Panc1 (cell line): ENCODE measurements at regions of chr10 and their contacts with region 1.

Region 1: GRCh38 chr10:48649349-48649944 is 35.2 kb upstream of the WDFY4 start:
- DNase-seq: no peak
- ATAC-seq: peak; percentile 68
- H3K4me3 ChIP-seq: no peak overlapping the region
- H3K27ac ChIP-seq: no peak overlapping the region
- H3K4me1 ChIP-seq: no peaks in the 10 kb centered on the region
- H3K27me3 ChIP-seq: no peaks in the 10 kb centered on the region; the same call in none of the 2 replicates
- CTCF ChIP-seq: no peak; the same call in 1 of the 2 replicates

Region 2: GRCh38 chr10:48551861-48552591 is 97.4 kb before region 1 on chr10:
- CTCF ChIA-PET with region 1: interaction called, 10 read pairs
- POLR2A ChIA-PET with region 1: no interaction called
- in situ Hi-C with region 1: no loop called
- intact Hi-C with region 1: no loop called
- DNase-seq: peak; percentile 22
- ATAC-seq: peak; percentile 80
- H3K4me3 ChIP-seq: no peak overlapping the region
- H3K27ac ChIP-seq: no peak overlapping the region
- H3K4me1 ChIP-seq: no peaks in the 10 kb centered on the region
- H3K27me3 ChIP-seq: no peaks in the 10 kb centered on the region
- CTCF ChIP-seq: peak; percentile 86